Mammary epithelial cell (primary cell): ENCODE measurements at regions of chr10 and their contacts with region 1.

Region 1: DNA sequence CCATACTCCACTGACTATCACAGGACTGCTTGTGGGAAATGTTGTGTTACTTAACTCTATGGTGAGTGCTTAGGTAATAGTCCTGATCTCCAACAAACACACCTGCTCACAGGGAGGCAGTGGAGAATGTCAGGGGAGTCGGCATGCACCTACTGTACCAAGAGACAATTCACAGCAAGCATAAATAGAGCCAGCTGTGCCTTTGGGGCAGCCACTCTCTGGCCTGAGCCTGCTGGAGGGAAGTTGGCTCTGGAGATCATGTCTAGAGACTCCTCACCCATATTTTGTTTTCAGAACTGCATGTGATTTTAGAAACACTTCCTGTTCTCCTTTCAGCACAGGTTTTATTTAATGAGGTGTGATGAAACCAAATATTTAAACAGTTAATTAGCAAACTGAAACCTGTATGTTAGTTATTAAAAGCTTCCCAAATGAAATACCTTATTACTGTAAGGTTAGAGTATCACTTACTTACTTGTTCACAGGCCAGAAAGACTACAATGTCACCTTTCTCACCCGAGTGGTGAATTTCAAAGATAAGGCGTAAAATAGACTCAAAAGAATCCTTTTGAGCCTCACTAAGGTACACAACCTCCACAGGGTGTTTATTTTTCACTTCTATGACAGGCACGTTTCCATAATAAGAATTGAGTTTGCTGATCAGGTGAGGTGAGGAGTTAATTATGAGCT is 21.8 kb downstream of the DHX32 start:
- DNase-seq: no peak
- H3K4me3 ChIP-seq: no peak overlapping the region
- H3K27ac ChIP-seq: no peak overlapping the region
- H3K4me1 ChIP-seq: no peaks in the 10 kb centered on the region
- H3K27me3 ChIP-seq: no peaks in the 10 kb centered on the region
- CTCF ChIP-seq: no peak

Region 2: GRCh38 chr10:125936331-125936730 is 77.1 kb after region 1 on chr10:
- CTCF ChIA-PET with region 1: no interaction called
- dilution Hi-C with region 1: loop called (anchors 5 kb)
- in situ Hi-C with region 1: no loop called
- intact Hi-C with region 1: no loop called
- DNase-seq: no peak
- H3K4me3 ChIP-seq: no peak overlapping the region
- H3K27ac ChIP-seq: no peak overlapping the region
- H3K4me1 ChIP-seq: peaks cover 7% of the 10 kb centered on the region
- H3K27me3 ChIP-seq: no peaks in the 10 kb centered on the region
- CTCF ChIP-seq: no peak

Region 3: GRCh38 chr10:126110489-126111180 is 251.4 kb after region 1 on chr10:
- CTCF ChIA-PET with region 1: no interaction called
- dilution Hi-C with region 1: no loop called
- in situ Hi-C with region 1: no loop called
- intact Hi-C with region 1: no loop called
- DNase-seq: no peak
- H3K4me3 ChIP-seq: no peak overlapping the region
- H3K27ac ChIP-seq: no peak overlapping the region
- H3K4me1 ChIP-seq: no peaks in the 10 kb centered on the region
- H3K27me3 ChIP-seq: no peaks in the 10 kb centered on the region
- CTCF ChIP-seq: no peak